Activated T-helper 1 cell treated with anti-CD3 and anti-CD28 coated beads, Interleukin-12 subunit alpha, Interleukin-12 subunit beta, Interleukin-2, Interleukin-4 antibody, amounts not matched to agents 30 ng/mL and 10 ng/mL and 1 ng/mL, durations not matched to agents 14 hours and 24 hours and 36 hours (primary cell): ENCODE measurements at regions of chr5 and their contacts with region 1.

Region 1: DNA sequence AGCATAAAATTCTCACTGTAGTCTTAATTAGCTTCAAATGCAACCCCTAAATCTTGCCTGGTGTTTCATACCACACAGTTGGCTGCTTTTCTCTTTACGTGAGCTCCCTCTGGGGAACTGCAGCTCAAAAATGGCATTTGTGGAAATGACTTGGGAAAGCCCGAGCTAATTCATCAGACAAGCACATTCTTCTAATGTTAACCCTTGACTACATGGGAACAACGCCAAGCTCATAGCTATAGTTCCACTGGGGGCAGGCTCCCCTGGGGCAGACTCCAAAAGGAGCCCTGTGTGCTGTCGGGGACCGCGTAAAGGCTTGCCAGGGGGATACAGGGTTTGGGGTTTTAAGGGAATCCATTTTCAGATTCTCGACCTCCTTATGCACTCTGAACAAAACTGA is 301.4 kb upstream of the DAP start:
- DNase-seq: no peak
- H3K4me3 Mint-ChIP-seq: no peak overlapping the region
- H3K27ac Mint-ChIP-seq: no peak overlapping the region
- H3K4me1 Mint-ChIP-seq: no peaks in the 10 kb centered on the region
- H3K27me3 Mint-ChIP-seq: no peaks in the 10 kb centered on the region

Region 2: GRCh38 chr5:10528056-10528816 is 534.2 kb before region 1 on chr5:
- intact Hi-C with region 1: no loop called
- DNase-seq: no peak
- H3K4me3 Mint-ChIP-seq: no peak overlapping the region
- H3K27ac Mint-ChIP-seq: no peak overlapping the region
- H3K4me1 Mint-ChIP-seq: no peaks in the 10 kb centered on the region
- H3K27me3 Mint-ChIP-seq: peaks cover 6% of the 10 kb centered on the region

Region 3: GRCh38 chr5:10913846-10914245 is 148.6 kb before region 1 on chr5:
- intact Hi-C with region 1: loop called (anchors 10 kb)
- DNase-seq: no peak
- H3K4me3 Mint-ChIP-seq: no peak overlapping the region
- H3K27ac Mint-ChIP-seq: no peak overlapping the region
- H3K4me1 Mint-ChIP-seq: no peaks in the 10 kb centered on the region
- H3K27me3 Mint-ChIP-seq: peaks cover 10% of the 10 kb centered on the region

Region 4: DNA sequence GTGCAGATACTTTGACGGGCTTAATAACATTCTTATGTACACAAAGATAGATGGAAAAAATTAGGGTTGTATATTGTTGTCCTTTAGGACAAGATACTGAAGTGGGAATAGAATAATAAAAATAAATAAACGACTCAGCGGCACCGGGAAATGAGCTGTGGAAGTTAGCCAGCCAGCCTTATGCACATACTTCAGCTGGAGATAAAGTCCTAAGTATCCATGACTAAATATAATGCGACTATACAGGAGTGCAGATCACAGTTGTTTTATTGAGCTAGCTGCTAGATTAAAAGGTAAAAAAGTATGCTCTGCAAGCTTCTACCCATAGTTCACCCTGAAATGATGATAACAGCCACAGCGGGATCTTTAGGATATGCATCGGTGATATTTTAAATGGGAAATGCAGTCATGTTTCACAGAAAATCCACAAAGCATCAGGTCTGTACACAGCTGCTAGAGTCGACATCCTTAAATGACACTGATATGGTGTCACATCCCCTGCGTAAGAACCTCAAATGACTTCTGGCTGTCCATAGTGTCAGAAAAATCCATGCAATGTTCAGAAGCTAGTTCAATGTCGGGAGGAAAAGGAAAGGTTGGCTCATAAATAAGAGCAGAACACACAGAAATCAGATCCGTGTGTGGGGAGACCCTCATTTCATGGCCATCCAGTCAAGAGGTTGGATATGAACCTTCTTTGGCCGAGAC is 91.4 kb after region 1 on chr5:
- intact Hi-C with region 1: no loop called
- DNase-seq: no peak
- H3K4me3 Mint-ChIP-seq: no peak overlapping the region
- H3K27ac Mint-ChIP-seq: no peak overlapping the region
- H3K4me1 Mint-ChIP-seq: no peaks in the 10 kb centered on the region
- H3K27me3 Mint-ChIP-seq: peaks cover 2% of the 10 kb centered on the region